ENCODE measurements at regions of chr1 and their contacts with region 1.

Region 1: GRCh38 chr1:226332947-226333346 is 24.0 kb upstream of the LIN9 start:
- DNase-seq: no peak
- H3K4me3 ChIP-seq: no peak overlapping the region
- H3K4me3 Mint-ChIP-seq: peak overlapping the region; percentile 70
- H3K27ac Mint-ChIP-seq: no peak overlapping the region
- H3K4me1 ChIP-seq: no peaks in the 10 kb centered on the region
- H3K4me1 Mint-ChIP-seq: no peaks in the 10 kb centered on the region
- H3K27me3 ChIP-seq: no peaks in the 10 kb centered on the region
- H3K27me3 Mint-ChIP-seq: no peaks in the 10 kb centered on the region
- CTCF ChIP-seq: no peak

Region 2: DNA sequence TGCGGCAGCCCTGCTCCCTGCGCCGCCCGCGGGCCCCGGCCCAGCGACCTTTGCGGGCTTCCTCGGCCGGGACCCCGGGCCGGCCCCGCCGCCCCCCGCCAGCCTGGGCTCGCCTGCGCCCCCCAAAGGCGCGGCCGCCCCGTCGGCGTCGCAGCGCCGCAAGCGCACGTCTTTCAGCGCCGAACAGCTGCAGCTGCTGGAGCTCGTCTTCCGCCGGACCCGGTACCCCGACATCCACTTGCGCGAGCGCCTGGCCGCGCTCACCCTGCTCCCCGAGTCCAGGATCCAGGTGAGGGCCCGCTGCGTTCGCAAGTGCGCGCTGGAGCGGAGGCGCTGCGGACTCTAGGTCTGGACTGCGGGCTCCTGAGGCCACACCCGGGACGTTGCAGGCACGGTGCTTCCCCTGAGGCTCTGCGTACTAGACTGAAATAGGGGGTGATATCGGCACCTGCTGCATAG is 109.1 kb before region 1 on chr1:
- CTCF ChIA-PET with region 1: no interaction called
- POLR2A ChIA-PET with region 1: no interaction called
- intact Hi-C with region 1: loop called (anchors 10 kb)
- DNase-seq: peak; percentile 46 to 53
- H3K4me3 ChIP-seq: peak overlapping the region; percentile 61
- H3K4me3 Mint-ChIP-seq: peak overlapping the region; percentile 74
- H3K27ac Mint-ChIP-seq: no peak overlapping the region
- H3K4me1 ChIP-seq: no peaks in the 10 kb centered on the region
- H3K4me1 Mint-ChIP-seq: no peaks in the 10 kb centered on the region
- H3K27me3 ChIP-seq: no peaks in the 10 kb centered on the region
- H3K27me3 Mint-ChIP-seq: no peaks in the 10 kb centered on the region
- CTCF ChIP-seq: no peak

Region 3: GRCh38 chr1:226390326-226391080 is 57.6 kb after region 1 on chr1:
- CTCF ChIA-PET with region 1: no interaction called
- POLR2A ChIA-PET with region 1: no interaction called
- intact Hi-C with region 1: no loop called
- DNase-seq: no peak
- H3K4me3 ChIP-seq: no peak overlapping the region
- H3K4me3 Mint-ChIP-seq: no peak overlapping the region
- H3K27ac Mint-ChIP-seq: no peak overlapping the region
- H3K4me1 ChIP-seq: no peaks in the 10 kb centered on the region
- H3K4me1 Mint-ChIP-seq: no peaks in the 10 kb centered on the region
- H3K27me3 ChIP-seq: no peaks in the 10 kb centered on the region
- H3K27me3 Mint-ChIP-seq: no peaks in the 10 kb centered on the region
- CTCF ChIP-seq: no peak

Measured in Caco-2 (cell line).